CD14-positive monocyte (primary cell): ENCODE measurements at regions of chrX and their contacts with region 1.

Region 1: DNA sequence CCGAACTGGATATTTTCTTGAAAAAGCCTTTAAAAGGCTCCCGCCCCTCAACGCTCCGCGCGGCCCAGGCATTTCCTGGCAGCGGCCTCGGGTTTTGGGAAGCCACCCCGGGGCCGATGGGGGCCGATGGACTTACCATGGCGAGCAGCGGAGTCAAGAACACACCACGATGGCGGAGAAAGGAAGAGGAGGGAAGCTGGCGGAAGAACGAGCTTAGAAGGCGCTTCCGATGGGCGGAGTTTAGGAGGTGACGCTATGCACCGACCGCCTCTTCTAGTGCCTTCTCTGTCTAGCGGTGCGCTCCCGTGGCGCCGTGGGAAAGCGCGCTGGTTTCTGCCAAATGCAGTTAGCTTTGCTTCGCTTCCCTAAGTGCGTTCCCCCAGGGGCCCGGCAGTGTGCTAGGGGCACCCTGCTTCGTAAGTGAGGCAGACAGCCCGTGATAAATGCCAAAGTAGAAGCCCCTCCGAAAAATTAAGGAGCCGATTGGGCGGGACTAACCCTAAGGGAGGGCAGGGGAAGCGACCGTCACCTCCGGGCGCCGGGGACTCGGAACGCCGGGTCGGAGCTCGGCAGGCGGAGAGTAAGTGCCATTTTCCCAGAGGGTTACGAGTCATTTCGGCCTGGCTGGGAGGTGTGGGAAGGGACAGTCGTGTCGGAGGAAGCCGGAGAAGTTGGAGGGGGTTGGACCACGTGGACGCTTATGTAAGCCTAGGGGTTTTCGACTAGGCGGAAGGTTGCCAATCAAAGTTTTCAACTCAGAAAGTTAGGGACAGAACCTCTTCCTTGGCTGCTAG is at the start of gene RPL39:
- DNase-seq: peak; percentile 82 to 89 (median 85)
- H3K4me3 ChIP-seq: peak within 1 kb of the TSS; percentile 58 to 97 (median 88)
- H3K4me3 Mint-ChIP-seq: peak within 1 kb of the TSS; percentile 91 to 92
- H3K27ac ChIP-seq: peak within 1 kb of the TSS; percentile 87 to 100
- H3K27ac Mint-ChIP-seq: peak within 1 kb of the TSS; percentile 95 to 98 (median 96)
- H3K4me1 ChIP-seq: peaks cover 27 to 32% of the 10 kb centered on the region in 2 donors
- H3K4me1 Mint-ChIP-seq: peaks cover 31% of the 10 kb centered on the region
- H3K27me3 ChIP-seq: no peaks in the 10 kb centered on the region
- H3K27me3 Mint-ChIP-seq: peaks cover 0 to 16% (median 1%) of the 10 kb centered on the region in 3 donors
- CTCF ChIP-seq: no peak
- polyA plus RNA-seq, gene RPL39: 1,908 to 2,198 (median 1,931) TPM

Region 2: GRCh38 chrX:119753571-119754257 is 37.9 kb before region 1 on chrX:
- intact Hi-C with region 1: no loop called
- DNase-seq: peak in 2 of 3 donors; percentile 34 to 39
- H3K4me3 ChIP-seq: no peak overlapping the region
- H3K4me3 Mint-ChIP-seq: no peak overlapping the region
- H3K27ac ChIP-seq: no peak overlapping the region
- H3K27ac Mint-ChIP-seq: peak overlapping the region in 5 of 7 donors; percentile 48 to 68 (median 50)
- H3K4me1 ChIP-seq: peaks cover 37 to 41% of the 10 kb centered on the region in 2 donors
- H3K4me1 Mint-ChIP-seq: peaks cover 42% of the 10 kb centered on the region
- H3K27me3 ChIP-seq: no peaks in the 10 kb centered on the region
- H3K27me3 Mint-ChIP-seq: peaks cover 0 to 13% (median 0%) of the 10 kb centered on the region in 3 donors
- CTCF ChIP-seq: peak; percentile 60

Region 3: GRCh38 chrX:119871599-119872395 is 80.2 kb after region 1 on chrX and contains the starts of genes NDUFA1 and RNF113A:
- intact Hi-C with region 1: loop called in 1 of 2 experiments (anchors 10 kb)
- DNase-seq: peak; percentile 73 to 80 (median 78)
- H3K4me3 ChIP-seq: peak within 1 kb of the TSS; percentile 84 to 94 (median 87)
- H3K4me3 Mint-ChIP-seq: peak within 1 kb of the TSS; percentile 90 to 99
- H3K27ac ChIP-seq: peak within 1 kb of the TSS; percentile 93 to 96
- H3K27ac Mint-ChIP-seq: peak within 1 kb of the TSS; percentile 94 to 99 (median 97)
- H3K4me1 ChIP-seq: peaks cover 11 to 21% of the 10 kb centered on the region in 2 donors
- H3K4me1 Mint-ChIP-seq: peaks cover 21% of the 10 kb centered on the region
- H3K27me3 ChIP-seq: no peaks in the 10 kb centered on the region
- H3K27me3 Mint-ChIP-seq: peaks cover 0 to 14% (median 0%) of the 10 kb centered on the region in 3 donors
- CTCF ChIP-seq: no peak
- polyA plus RNA-seq, gene NDUFA1: 55.6 to 353 (median 321) TPM
- polyA plus RNA-seq, gene RNF113A: 20.4 to 21.6 (median 21.5) TPM